OCI-LY7 (cell line): ENCODE measurements at regions of chr14 and their contacts with region 1.

Region 1: GRCh38 chr14:75440733-75441477 is 13.1 kb downstream of the JDP2 start:
- DNase-seq: peak; percentile 51
- H3K4me3 ChIP-seq: peak overlapping the region; percentile 64
- H3K27ac ChIP-seq: peak overlapping the region; percentile 84
- H3K4me1 ChIP-seq: peaks cover 93% of the 10 kb centered on the region
- CTCF ChIP-seq: no peak

Region 2: DNA sequence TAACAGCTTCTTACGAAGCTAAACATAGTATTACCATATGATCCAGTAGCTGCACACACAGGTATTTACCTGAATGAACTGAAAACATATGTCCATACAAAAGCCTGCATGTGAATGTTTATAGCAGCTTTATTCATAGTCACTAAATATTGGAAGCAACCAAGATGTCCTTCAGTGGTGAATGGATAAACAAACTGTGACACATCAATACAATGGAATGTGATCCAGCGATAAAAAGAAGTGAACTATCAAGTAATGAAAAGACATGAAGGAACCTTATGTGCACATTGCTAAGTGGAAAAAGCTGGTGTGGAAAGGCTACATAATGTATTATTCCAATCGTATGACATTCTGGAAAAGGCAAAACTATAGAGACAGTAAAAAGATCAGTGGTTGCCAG is 51.2 kb before region 1 on chr14:
- CTCF ChIA-PET with region 1: no interaction called
- POLR2A ChIA-PET with region 1: no interaction called
- intact Hi-C with region 1: no loop called
- DNase-seq: no peak
- H3K4me3 ChIP-seq: no peak overlapping the region
- H3K27ac ChIP-seq: no peak overlapping the region
- H3K4me1 ChIP-seq: no peaks in the 10 kb centered on the region
- CTCF ChIP-seq: no peak

Region 3: DNA sequence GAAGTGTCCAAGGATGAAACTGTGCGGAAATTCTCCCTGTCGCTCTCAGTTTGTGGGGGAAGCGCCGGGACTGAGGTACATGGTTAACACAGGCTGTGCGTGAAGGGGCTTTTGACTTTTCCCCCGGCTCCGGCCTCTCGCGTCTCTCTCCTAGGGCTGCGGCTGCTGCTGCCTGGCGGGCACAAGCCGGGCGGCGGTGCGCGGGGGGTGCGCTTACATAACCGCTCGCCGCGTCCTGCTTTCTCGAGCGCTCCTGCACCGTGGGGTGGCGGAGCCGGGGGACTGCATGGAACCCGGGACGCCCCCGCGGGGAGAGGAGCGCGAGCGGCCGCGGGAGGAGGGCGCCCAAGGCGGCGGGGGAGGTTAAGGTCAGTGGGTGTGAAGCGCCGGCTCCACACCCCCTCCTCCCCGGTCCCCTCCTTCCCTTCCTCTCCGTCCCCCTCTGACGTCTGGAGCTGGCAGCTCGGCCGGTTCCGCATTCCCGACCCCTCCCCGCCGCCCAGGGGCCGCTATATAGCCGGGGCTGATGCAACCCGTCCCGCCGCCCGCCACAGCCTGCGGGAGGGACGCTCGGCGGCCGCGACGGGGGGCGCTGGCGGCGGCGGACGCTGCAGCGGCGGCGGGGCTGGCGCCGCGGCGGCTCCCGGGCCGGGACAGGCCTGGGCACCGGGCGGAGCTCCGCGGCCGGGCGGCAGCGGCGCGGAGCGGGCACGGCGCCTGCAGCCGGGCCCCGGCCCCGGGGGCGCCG is 13.2 kb before region 1 on chr14 and contains the start of gene JDP2:
- CTCF ChIA-PET with region 1: interaction called, 7 read pairs
- POLR2A ChIA-PET with region 1: interaction called, 35 read pairs
- intact Hi-C with region 1: loop called (anchors 1 kb)
- DNase-seq: peak; percentile 80
- H3K4me3 ChIP-seq: peak within 1 kb of the TSS; percentile 90
- H3K27ac ChIP-seq: peak within 1 kb of the TSS; percentile 77
- H3K4me1 ChIP-seq: peaks cover 46% of the 10 kb centered on the region
- CTCF ChIP-seq: peak; percentile 33; the same call in 1 of the 2 replicates
- total RNA-seq, gene JDP2: 53.7 and 62.7 TPM in 2 replicates

Region 4: DNA sequence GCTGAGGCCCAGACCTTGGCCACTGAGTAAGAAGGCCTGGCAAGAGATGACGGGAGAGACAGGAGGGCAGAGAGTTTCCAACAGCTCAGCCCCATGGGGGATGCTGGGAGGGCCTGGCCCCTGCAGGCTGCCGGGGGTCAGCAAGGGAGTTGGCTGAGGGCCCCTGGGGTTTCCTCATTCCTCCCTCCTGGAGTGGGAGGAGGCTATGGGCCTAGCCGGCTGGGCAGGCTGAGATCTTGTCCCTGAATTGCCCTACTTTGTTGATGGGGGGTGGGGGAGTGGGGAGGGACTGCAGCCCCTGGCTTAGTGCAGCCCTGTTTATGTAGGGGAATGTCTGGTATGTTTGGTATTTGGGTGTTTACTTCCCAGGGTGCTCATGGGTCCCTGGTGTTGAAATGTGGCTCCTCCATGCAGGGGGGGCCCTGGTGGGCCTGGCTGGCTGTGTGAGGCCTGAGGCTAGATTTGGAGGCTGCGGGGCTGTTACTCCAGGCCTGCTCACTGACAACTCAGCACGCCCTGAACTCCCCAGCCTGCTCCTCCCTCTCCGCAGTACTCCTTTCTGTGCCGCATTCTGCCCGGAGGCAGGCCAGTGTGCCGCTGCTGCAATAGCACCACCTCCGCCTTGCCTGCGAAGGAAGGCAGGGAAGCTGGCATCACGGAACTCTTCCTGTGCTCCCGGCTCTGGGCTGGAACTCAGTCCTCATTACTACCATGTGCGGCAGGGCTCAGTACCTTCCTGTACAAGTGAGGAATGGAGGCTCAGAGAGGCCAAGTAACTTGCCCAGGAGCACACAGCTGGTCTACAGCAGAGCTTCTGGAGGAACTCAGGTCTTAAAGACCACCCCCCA is 12.2 kb after region 1 on chr14:
- CTCF ChIA-PET with region 1: interaction called, 16 read pairs
- POLR2A ChIA-PET with region 1: interaction called, 9 read pairs
- intact Hi-C with region 1: no loop called
- DNase-seq: no peak
- H3K4me3 ChIP-seq: no peak overlapping the region
- H3K27ac ChIP-seq: peak overlapping the region; percentile 57
- H3K4me1 ChIP-seq: peaks cover 69% of the 10 kb centered on the region
- CTCF ChIP-seq: no peak

Region 5: GRCh38 chr14:75469606-75470237 is 28.8 kb after region 1 on chr14:
- CTCF ChIA-PET with region 1: interaction called, 3 read pairs
- POLR2A ChIA-PET with region 1: interaction called, 8 read pairs
- intact Hi-C with region 1: loop called (anchors 1 kb)
- DNase-seq: no peak
- H3K4me3 ChIP-seq: peak overlapping the region; percentile 50
- H3K27ac ChIP-seq: peak overlapping the region; percentile 98
- H3K4me1 ChIP-seq: peaks cover 95% of the 10 kb centered on the region
- CTCF ChIP-seq: no peak

Region 6: DNA sequence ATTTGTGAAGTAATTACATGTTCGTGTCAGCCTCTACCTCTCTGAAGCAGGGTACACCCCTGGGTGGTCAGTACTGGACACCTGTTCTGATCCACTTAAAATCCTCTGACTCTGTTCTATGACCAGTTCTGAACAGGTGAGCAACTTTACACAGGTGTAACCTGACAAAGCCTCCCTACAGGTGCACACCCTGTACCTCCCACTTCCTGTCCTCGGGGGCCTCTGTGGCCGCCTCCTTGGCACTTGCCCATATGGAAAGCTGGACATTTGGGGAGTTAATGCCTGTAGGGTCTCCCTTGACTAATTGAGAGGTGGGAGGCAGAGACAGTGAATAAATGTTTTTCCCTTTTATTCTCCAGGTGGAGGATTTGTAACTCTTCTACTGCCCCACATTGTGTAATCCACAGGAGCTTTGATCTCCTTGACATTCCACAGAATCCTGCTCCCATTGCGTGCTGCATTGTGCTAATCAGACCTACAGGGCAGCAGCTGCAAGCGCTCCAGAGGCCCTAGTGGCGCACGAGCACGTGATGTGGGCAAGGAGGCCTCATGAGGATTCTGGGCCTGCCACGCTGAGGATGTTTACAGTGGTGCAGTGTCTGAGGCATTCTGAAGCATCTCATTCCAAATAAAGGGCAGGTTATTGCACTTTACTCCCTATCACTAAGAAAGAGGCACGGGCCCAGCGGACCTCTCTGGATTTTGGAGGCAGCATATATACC is 35.5 kb after region 1 on chr14:
- CTCF ChIA-PET with region 1: no interaction called
- POLR2A ChIA-PET with region 1: interaction called, 11 read pairs
- intact Hi-C with region 1: loop called (anchors 2 kb)
- DNase-seq: peak; percentile 71
- H3K4me3 ChIP-seq: peak overlapping the region; percentile 4
- H3K27ac ChIP-seq: peak overlapping the region; percentile 40
- H3K4me1 ChIP-seq: peaks cover 88% of the 10 kb centered on the region
- CTCF ChIP-seq: peak; percentile 21; the same call in 1 of the 2 replicates